Thyroid gland (tissue), 4 donors: ENCODE measurements at regions of chr17 and their contacts with region 1.

Region 1: GRCh38 chr17:27353461-27354050 is 59.6 kb downstream of the WSB1 start:
- DNase-seq: peak; percentile 88 to 92
- H3K4me3 ChIP-seq: peak overlapping the region; percentile 48 to 63 (median 51)
- H3K27ac ChIP-seq: peak overlapping the region; percentile 86 to 93 (median 91)
- H3K4me1 ChIP-seq: peaks cover 11 to 12% of the 10 kb centered on the region in 2 donors
- H3K27me3 ChIP-seq: no peaks in the 10 kb centered on the region
- CTCF ChIP-seq: peak; percentile 17 to 99 (median 98)
- POLR2A ChIP-seq: peak; percentile 50 to 91

Region 2: GRCh38 chr17:27306276-27306835 is 47.2 kb before region 1 on chr17:
- intact Hi-C with region 1: no loop called
- DNase-seq: no peak
- H3K4me3 ChIP-seq: no peak overlapping the region
- H3K27ac ChIP-seq: no peak overlapping the region
- H3K4me1 ChIP-seq: peaks cover 0 to 6% of the 10 kb centered on the region in 2 donors
- H3K27me3 ChIP-seq: no peaks in the 10 kb centered on the region
- CTCF ChIP-seq: no peak
- POLR2A ChIP-seq: no peak

Region 3: GRCh38 chr17:27446569-27447301 is 93.2 kb after region 1 on chr17:
- intact Hi-C with region 1: loop called (anchors 5 kb)
- DNase-seq: no peak
- H3K4me3 ChIP-seq: no peak overlapping the region
- H3K27ac ChIP-seq: no peak overlapping the region
- H3K4me1 ChIP-seq: no peaks in the 10 kb centered on the region
- H3K27me3 ChIP-seq: no peaks in the 10 kb centered on the region
- CTCF ChIP-seq: no peak
- POLR2A ChIP-seq: no peak